Body of pancreas (tissue), 4 donors: ENCODE measurements at regions of chr6 and their contacts with region 1.

Region 1: DNA sequence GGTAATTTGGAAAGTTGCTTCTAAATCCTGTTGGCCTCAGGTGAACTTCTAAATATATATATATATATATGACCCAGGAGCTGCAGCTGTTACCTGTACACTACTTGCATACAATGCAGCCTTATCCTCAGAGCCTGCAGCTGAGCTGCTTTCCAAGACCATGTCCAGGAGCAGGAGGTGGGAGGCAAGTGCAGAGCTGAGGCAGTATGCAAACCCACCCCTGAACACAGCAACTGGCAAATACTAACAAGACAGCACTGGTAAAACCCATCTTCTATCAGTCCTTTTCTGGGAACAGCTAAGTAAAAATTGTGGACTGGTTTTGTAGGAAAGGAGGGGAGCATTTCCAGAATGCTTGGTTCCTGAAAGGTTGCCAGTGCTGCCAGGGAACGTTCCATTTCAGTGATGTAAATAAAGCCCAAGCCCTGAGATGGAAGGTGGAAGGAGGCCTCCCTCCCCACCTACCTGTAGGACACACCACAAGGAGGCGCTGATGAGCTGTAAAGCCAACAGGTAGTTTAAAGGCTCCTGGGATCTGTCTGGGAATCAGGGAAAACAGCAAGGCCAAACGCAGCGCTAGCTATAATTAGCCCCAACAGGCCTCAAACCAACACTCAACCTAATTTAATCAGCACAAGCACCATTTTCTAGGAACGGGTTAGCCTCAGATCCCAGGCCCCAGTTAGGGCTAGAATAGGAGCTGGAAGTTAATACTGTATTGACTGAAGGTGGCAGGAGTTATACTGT is 93.8 kb upstream of the MAP7 start:
- DNase-seq: peak; percentile 97 to 99 (median 98)
- ATAC-seq: peak; percentile 96
- H3K4me3 ChIP-seq: no peak overlapping the region
- H3K27ac ChIP-seq: peak overlapping the region; percentile 41 to 59 (median 54)
- H3K4me1 ChIP-seq: peaks cover 49% of the 10 kb centered on the region
- H3K27me3 ChIP-seq: no peaks in the 10 kb centered on the region
- CTCF ChIP-seq: peak; percentile 68 to 98 (median 97)
- POLR2A ChIP-seq: no peak

Region 2: DNA sequence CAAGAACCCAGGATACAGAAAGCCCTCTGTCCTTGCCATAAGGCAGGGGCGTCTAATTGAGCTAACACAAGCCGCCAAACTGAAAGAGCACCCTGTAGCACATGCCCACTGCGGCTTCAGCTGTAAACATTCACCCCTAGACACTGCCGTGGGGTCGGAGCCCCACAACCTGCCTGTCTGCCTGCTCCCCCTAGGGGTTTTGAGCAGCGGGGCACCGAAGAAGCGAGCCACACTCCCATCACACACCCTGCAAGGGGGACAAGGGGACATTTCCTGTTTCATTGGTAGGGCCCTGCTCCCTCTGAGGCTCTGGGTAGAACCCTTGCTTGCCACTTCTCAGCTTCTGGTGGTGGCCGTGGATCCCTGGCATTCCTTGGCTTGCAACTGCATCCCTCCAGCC is 309.2 kb before region 1 on chr6:
- intact Hi-C with region 1: no loop called
- DNase-seq: no peak
- ATAC-seq: no peak
- H3K4me3 ChIP-seq: no peak overlapping the region
- H3K27ac ChIP-seq: no peak overlapping the region
- H3K4me1 ChIP-seq: no peaks in the 10 kb centered on the region
- H3K27me3 ChIP-seq: no peaks in the 10 kb centered on the region
- CTCF ChIP-seq: no peak
- POLR2A ChIP-seq: no peak

Region 3: GRCh38 chr6:136701045-136701444 is 57.0 kb after region 1 on chr6:
- intact Hi-C with region 1: loop called (anchors 10 kb)
- DNase-seq: peak in 1 of 4 donors; percentile 16
- ATAC-seq: peak; percentile 36
- H3K4me3 ChIP-seq: no peak overlapping the region
- H3K27ac ChIP-seq: peak overlapping the region; percentile 1 to 58 (median 50)
- H3K4me1 ChIP-seq: peaks cover 53% of the 10 kb centered on the region
- H3K27me3 ChIP-seq: no peaks in the 10 kb centered on the region
- CTCF ChIP-seq: peak in 1 of 7 experiments; percentile 7
- POLR2A ChIP-seq: no peak

Region 4: GRCh38 chr6:136792410-136793262 is 148.6 kb after region 1 on chr6 and contains the start of gene MAP3K5:
- intact Hi-C with region 1: loop called (anchors 10 kb)
- DNase-seq: peak; percentile 93 to 94 (median 94)
- ATAC-seq: peak; percentile 87
- H3K4me3 ChIP-seq: peak within 1 kb of the TSS; percentile 88 to 94
- H3K27ac ChIP-seq: peak within 1 kb of the TSS; percentile 88 to 99 (median 97)
- H3K4me1 ChIP-seq: peaks cover 24% of the 10 kb centered on the region
- H3K27me3 ChIP-seq: no peaks in the 10 kb centered on the region
- CTCF ChIP-seq: peak; percentile 58 to 99 (median 81)
- POLR2A ChIP-seq: peak; percentile 54 to 86 (median 77)
- total RNA-seq, gene MAP3K5: 33.7 to 36.9 TPM

Region 5: GRCh38 chr6:136927292-136927691 is 283.3 kb after region 1 on chr6:
- intact Hi-C with region 1: no loop called
- DNase-seq: peak in 3 of 4 donors; percentile 20 to 43 (median 26)
- ATAC-seq: no peak
- H3K4me3 ChIP-seq: no peak overlapping the region
- H3K27ac ChIP-seq: no peak overlapping the region
- H3K4me1 ChIP-seq: peaks cover 14% of the 10 kb centered on the region
- H3K27me3 ChIP-seq: no peaks in the 10 kb centered on the region
- CTCF ChIP-seq: peak in 6 of 7 experiments; percentile 12 to 52 (median 38)
- POLR2A ChIP-seq: no peak